T-cell (primary cell): ENCODE measurements at regions of chr12 and their contacts with region 1.

Region 1: GRCh38 chr12:9750276-9751203 is 10.2 kb downstream of the CD69 start:
- DNase-seq: peak in 23 of 35 experiments; percentile 15 to 85 (median 40)
- ATAC-seq: peak; percentile 46 to 75 (median 72)
- H3K4me3 ChIP-seq: peak overlapping the region in 1 of 2 donors; percentile 32
- H3K4me3 Mint-ChIP-seq: peak overlapping the region in 2 of 3 donors; percentile 28 to 39
- H3K27ac ChIP-seq: no peak overlapping the region
- H3K27ac Mint-ChIP-seq: peak overlapping the region in 1 of 2 donors; percentile 46
- H3K4me1 ChIP-seq: peaks cover 9 to 26% of the 10 kb centered on the region in 2 experiments
- H3K4me1 Mint-ChIP-seq: peaks cover 43 to 54% (median 46%) of the 10 kb centered on the region in 3 donors
- H3K27me3 ChIP-seq: no peaks in the 10 kb centered on the region
- H3K27me3 Mint-ChIP-seq: no peaks in the 10 kb centered on the region

Region 2: DNA sequence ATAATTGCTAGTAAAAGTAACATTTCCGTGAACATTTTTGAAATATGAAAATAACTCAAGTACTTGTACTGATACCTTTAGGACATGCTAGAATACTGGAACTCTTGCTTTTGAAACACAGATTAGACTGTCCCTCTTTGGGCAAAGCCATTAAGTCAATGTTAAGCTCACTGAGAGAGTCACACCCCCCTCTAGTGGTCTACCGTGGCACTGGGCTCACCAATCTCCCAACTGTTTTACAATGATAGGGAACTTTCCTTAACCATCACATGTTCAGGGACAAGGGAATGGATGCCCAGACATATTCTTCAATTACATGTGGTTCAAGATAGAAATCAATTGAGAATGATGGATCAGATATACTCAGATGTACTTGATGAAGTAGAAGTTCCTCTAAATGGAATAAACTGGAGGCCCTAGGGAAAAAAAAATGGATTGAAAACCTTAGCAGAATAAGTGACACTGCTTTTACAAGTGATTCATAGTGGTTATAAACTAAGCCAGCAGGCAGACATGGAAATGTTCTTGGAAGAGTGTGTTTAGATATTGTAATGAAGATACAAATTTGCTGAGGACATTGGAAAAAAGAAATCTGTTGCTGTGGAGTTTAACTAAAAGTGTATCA is 1943.6 kb before region 1 on chr12:
- CTCF ChIA-PET with region 1: no interaction called
- POLR2A ChIA-PET with region 1: no interaction called
- DNase-seq: peak in 33 of 35 experiments; percentile 3 to 72 (median 39)
- ATAC-seq: peak; percentile 47 to 70 (median 54)
- H3K4me3 ChIP-seq: no peak overlapping the region
- H3K4me3 Mint-ChIP-seq: no peak overlapping the region
- H3K27ac ChIP-seq: no peak overlapping the region
- H3K27ac Mint-ChIP-seq: no peak overlapping the region
- H3K4me1 ChIP-seq: no peaks in the 10 kb centered on the region
- H3K4me1 Mint-ChIP-seq: no peaks in the 10 kb centered on the region
- H3K27me3 ChIP-seq: peaks cover 0 to 7% of the 10 kb centered on the region in 2 experiments
- H3K27me3 Mint-ChIP-seq: no peaks in the 10 kb centered on the region

Region 3: DNA sequence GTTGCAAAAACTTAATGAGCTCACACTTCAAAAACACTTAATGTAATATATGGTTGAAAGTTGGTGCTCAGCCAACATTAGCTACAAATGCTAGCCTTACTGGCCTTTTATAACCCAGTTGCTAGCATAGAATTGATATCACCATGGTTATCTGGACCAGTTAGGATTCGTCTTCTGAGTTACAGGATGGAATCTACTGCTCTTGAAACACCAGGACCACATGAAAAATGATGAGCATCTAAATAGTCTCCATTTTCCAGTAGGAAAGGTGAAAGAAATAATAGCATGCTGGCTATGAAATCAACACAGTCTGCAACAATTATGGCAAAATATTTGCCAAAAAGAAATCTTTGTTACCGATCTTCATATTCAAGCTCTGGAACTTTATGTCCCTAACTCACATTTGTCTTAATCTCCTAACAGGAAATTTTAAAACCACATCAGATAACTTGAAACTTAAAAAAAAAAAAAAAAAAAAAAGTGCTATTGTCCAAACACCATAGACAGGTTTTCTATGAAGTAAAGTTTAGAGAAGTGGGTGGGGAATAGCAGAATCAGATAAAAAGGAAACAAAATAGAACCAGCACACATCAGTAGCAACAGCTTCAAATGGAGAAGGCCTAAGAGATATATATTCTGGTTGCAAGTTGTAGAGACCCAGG is 22.8 kb after region 1 on chr12:
- CTCF ChIA-PET with region 1: interaction called, 5 to 17 read pairs
- POLR2A ChIA-PET with region 1: interaction called, 4 to 16 read pairs
- DNase-seq: peak in 1 of 35 experiments; percentile 48
- ATAC-seq: peak in 3 of 4 experiments; percentile 63 to 80 (median 66)
- H3K4me3 ChIP-seq: no peak overlapping the region
- H3K4me3 Mint-ChIP-seq: peak overlapping the region; percentile 5 to 61 (median 37)
- H3K27ac ChIP-seq: peak overlapping the region; percentile 14
- H3K27ac Mint-ChIP-seq: peak overlapping the region; percentile 78 to 84
- H3K4me1 ChIP-seq: peaks cover 25 to 50% of the 10 kb centered on the region in 2 experiments
- H3K4me1 Mint-ChIP-seq: peaks cover 80 to 89% (median 82%) of the 10 kb centered on the region in 3 donors
- H3K27me3 ChIP-seq: no peaks in the 10 kb centered on the region
- H3K27me3 Mint-ChIP-seq: no peaks in the 10 kb centered on the region

Region 4: DNA sequence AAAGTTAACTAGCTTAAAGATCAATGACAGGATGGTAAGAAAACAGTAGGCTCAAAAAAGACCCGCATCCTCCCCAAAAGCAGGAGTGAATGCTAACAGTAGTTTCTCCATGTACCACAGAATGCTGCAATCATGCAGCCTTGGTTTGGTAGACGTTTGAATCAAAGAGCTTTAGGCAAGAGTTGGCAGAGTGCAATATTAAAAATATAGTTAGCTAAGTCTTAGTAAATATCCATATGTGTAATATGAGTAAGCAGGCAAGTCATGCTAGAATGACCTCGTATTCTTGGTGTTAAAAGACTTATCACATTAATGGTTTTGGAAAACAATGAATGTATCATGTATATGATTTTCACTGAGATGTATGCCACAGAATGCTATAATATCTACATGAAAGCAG is 58.0 kb after region 1 on chr12:
- CTCF ChIA-PET with region 1: interaction called, 31 to 33 read pairs
- POLR2A ChIA-PET with region 1: interaction called in 1 of 2 experiments, 10 read pairs
- DNase-seq: no peak
- ATAC-seq: no peak
- H3K4me3 ChIP-seq: no peak overlapping the region
- H3K4me3 Mint-ChIP-seq: no peak overlapping the region
- H3K27ac ChIP-seq: no peak overlapping the region
- H3K27ac Mint-ChIP-seq: no peak overlapping the region
- H3K4me1 ChIP-seq: peaks cover 4 to 5% of the 10 kb centered on the region in 2 experiments
- H3K4me1 Mint-ChIP-seq: peaks cover 2 to 8% (median 3%) of the 10 kb centered on the region in 3 donors
- H3K27me3 ChIP-seq: peaks cover 0 to 3% of the 10 kb centered on the region in 2 experiments
- H3K27me3 Mint-ChIP-seq: peaks cover 12 to 13% of the 10 kb centered on the region in 2 donors

Region 5: GRCh38 chr12:9829990-9830389 is 79.5 kb after region 1 on chr12:
- CTCF ChIA-PET with region 1: interaction called, 3 to 10 read pairs
- POLR2A ChIA-PET with region 1: no interaction called
- DNase-seq: no peak
- ATAC-seq: no peak
- H3K4me3 ChIP-seq: no peak overlapping the region
- H3K4me3 Mint-ChIP-seq: peak overlapping the region in 2 of 3 donors; percentile 14 to 34
- H3K27ac ChIP-seq: no peak overlapping the region
- H3K27ac Mint-ChIP-seq: no peak overlapping the region
- H3K4me1 ChIP-seq: no peaks in the 10 kb centered on the region
- H3K4me1 Mint-ChIP-seq: peaks cover 0 to 10% (median 0%) of the 10 kb centered on the region in 3 donors
- H3K27me3 ChIP-seq: no peaks in the 10 kb centered on the region
- H3K27me3 Mint-ChIP-seq: no peaks in the 10 kb centered on the region

Region 6: GRCh38 chr12:9843416-9843815 is 92.9 kb after region 1 on chr12:
- CTCF ChIA-PET with region 1: no interaction called
- POLR2A ChIA-PET with region 1: no interaction called
- DNase-seq: no peak
- ATAC-seq: no peak
- H3K4me3 ChIP-seq: no peak overlapping the region
- H3K4me3 Mint-ChIP-seq: no peak overlapping the region
- H3K27ac ChIP-seq: no peak overlapping the region
- H3K27ac Mint-ChIP-seq: no peak overlapping the region
- H3K4me1 ChIP-seq: no peaks in the 10 kb centered on the region
- H3K4me1 Mint-ChIP-seq: no peaks in the 10 kb centered on the region
- H3K27me3 ChIP-seq: no peaks in the 10 kb centered on the region
- H3K27me3 Mint-ChIP-seq: no peaks in the 10 kb centered on the region

Region 7: DNA sequence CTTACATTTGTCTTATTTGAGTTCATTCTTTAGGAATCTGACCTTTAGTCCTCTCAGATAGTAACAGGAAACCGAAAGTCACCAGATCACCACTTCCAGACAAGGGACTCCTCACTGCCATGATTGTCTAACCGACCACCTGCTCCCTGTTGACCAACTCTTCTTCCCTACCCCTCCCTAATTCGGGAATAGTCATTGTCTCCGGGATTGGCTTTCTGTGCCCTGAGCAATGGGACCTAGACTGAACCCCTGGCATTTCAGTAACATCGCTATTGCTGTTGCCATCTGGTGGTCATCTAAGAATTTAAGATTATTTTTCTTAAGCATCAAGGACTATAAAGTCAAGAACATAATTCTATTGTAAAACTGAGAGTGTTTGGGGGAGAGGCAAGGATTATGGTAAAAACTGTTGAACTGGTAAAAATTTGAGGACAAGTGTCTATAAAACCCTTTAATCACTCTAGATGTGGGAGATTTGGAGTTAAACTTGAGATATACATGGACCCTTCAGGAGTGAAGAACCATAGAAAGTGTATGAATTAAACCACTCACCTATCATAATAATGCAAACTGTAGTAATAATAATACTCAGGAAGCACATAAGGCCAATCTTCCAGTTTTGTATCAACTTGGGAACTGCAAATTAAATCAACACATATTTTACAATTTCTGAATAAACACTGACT is 175.3 kb after region 1 on chr12:
- CTCF ChIA-PET with region 1: interaction called, 10 to 15 read pairs
- POLR2A ChIA-PET with region 1: no interaction called
- DNase-seq: peak in 11 of 35 experiments; percentile 2 to 68 (median 15)
- ATAC-seq: peak in 3 of 4 experiments; percentile 48 to 66 (median 63)
- H3K4me3 ChIP-seq: peak overlapping the region; percentile 16 to 38
- H3K4me3 Mint-ChIP-seq: peak overlapping the region; percentile 47 to 72 (median 60)
- H3K27ac ChIP-seq: no peak overlapping the region
- H3K27ac Mint-ChIP-seq: no peak overlapping the region
- H3K4me1 ChIP-seq: peaks cover 2 to 3% of the 10 kb centered on the region in 2 experiments
- H3K4me1 Mint-ChIP-seq: peaks cover 13 to 25% (median 15%) of the 10 kb centered on the region in 3 donors
- H3K27me3 ChIP-seq: no peaks in the 10 kb centered on the region
- H3K27me3 Mint-ChIP-seq: peaks cover 4 to 9% of the 10 kb centered on the region in 2 donors

Region 8: DNA sequence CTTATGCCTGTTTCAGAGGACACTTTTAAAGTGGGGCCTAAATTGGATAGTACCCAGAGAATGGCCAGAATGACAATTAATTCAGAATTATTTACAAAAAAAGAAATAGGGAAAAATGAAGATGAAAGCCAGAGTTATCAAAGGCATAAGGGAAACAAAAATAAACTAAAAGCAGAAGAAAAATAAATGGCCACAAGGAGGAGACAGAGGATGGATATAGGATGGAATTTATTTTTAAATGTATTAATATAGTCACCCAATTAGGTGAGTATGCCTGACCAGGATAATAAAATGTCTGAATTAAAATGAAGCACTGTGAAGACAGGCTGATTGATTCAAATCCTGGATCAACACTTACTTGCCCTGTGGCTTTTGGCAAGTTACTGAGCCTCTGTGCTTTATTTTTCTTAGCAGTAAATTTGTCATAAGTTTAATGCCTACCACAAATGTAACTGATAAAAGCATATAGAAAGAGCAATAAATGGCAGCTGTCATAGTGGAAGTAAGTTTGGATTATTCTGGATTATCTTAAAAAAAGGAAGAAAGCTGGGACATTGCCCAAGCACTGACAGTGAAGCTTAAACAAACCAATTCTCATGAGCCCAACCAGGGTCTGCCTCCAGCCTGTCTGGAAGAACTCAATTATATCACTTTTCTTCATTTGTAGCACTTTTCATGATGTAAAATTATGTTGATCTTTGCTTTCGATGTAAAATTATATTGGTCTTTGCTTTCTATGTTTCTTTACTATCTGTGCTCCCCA is 283.4 kb after region 1 on chr12:
- CTCF ChIA-PET with region 1: no interaction called
- POLR2A ChIA-PET with region 1: no interaction called
- DNase-seq: no peak
- ATAC-seq: no peak
- H3K4me3 ChIP-seq: no peak overlapping the region
- H3K4me3 Mint-ChIP-seq: no peak overlapping the region
- H3K27ac ChIP-seq: no peak overlapping the region
- H3K27ac Mint-ChIP-seq: no peak overlapping the region
- H3K4me1 ChIP-seq: no peaks in the 10 kb centered on the region
- H3K4me1 Mint-ChIP-seq: no peaks in the 10 kb centered on the region
- H3K27me3 ChIP-seq: peaks cover 0 to 11% of the 10 kb centered on the region in 2 experiments
- H3K27me3 Mint-ChIP-seq: peaks cover 0 to 5% of the 10 kb centered on the region in 2 donors